ENCODE measurements at regions of chr14 and their contacts with region 1.

Region 1: GRCh38 chr14:75205591-75205990 is 29.2 kb upstream of the TMED10 start:
- DNase-seq: peak; percentile 82
- H3K4me3 ChIP-seq: no peak overlapping the region
- H3K27ac ChIP-seq: peak overlapping the region; percentile 74
- H3K4me1 ChIP-seq: peaks cover 15% of the 10 kb centered on the region
- H3K27me3 ChIP-seq: no peaks in the 10 kb centered on the region
- CTCF ChIP-seq: no peak
- POLR2A ChIP-seq: no peak

Region 2: DNA sequence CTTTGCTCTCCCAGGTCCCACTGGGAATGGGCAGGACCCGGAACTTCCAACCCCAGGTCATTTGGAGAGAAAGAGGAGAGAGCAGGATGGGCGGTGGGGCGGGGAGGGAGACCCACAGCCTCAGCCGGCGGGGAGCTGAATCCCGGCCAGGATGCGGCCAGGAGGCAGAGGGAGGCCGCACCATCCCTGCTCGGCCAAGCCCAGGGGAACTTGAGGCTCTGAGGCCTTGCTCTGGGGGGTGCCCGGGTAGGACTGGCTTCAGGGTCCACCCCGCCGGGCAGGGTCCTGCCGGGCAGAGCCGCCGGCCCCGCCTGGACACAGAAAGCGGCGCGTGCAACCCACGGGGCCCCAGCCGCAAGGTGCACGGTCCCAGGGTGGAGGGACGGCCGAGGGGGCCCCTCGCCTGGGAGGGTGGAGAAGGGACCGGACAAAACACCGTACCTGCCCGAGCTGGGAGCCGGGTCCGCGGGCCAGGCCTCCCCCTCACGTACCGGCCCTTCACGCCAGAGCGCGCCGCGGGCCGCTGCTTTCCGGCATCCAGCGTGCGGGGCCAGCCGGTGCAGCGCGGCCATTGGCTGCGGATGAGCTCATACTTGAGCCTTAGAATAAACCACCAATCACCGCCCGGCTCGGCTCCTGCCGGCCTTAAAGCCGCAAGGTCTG is 282.7 kb before region 1 on chr14 and contains the start of gene RPS6KL1:
- CTCF ChIA-PET with region 1: no interaction called
- POLR2A ChIA-PET with region 1: no interaction called
- dilution Hi-C with region 1: no loop called
- intact Hi-C with region 1: no loop called
- DNase-seq: peak; percentile 87
- H3K4me3 ChIP-seq: peak within 1 kb of the TSS; percentile 55 to 69 (median 58)
- H3K27ac ChIP-seq: peak within 1 kb of the TSS; percentile 50
- H3K4me1 ChIP-seq: peaks cover 5% of the 10 kb centered on the region
- H3K27me3 ChIP-seq: no peaks in the 10 kb centered on the region
- CTCF ChIP-seq: no peak
- POLR2A ChIP-seq: no peak
- total RNA-seq, gene RPS6KL1: 23.8 and 25.6 TPM in 2 replicates

Region 3: GRCh38 chr14:75234173-75235115 is 28.9 kb after region 1 on chr14:
- CTCF ChIA-PET with region 1: interaction called, 3 read pairs
- POLR2A ChIA-PET with region 1: no interaction called
- dilution Hi-C with region 1: no loop called
- intact Hi-C with region 1: loop called (anchors 1 kb)
- DNase-seq: peak; percentile 92
- H3K4me3 ChIP-seq: no peak overlapping the region
- H3K27ac ChIP-seq: peak overlapping the region; percentile 91
- H3K4me1 ChIP-seq: peaks cover 23% of the 10 kb centered on the region
- H3K27me3 ChIP-seq: no peaks in the 10 kb centered on the region
- CTCF ChIP-seq: no peak
- POLR2A ChIP-seq: no peak

Region 4: GRCh38 chr14:75522224-75522982 is 316.8 kb after region 1 on chr14 and contains the start of gene BATF:
- CTCF ChIA-PET with region 1: no interaction called
- POLR2A ChIA-PET with region 1: no interaction called
- dilution Hi-C with region 1: no loop called
- intact Hi-C with region 1: no loop called
- DNase-seq: no peak
- H3K4me3 ChIP-seq: no peak within 1 kb of the TSS
- H3K27ac ChIP-seq: peak within 1 kb of the TSS; percentile 82
- H3K4me1 ChIP-seq: peaks cover 25% of the 10 kb centered on the region
- H3K27me3 ChIP-seq: no peaks in the 10 kb centered on the region
- CTCF ChIP-seq: no peak
- POLR2A ChIP-seq: no peak
- total RNA-seq, gene BATF: not detected in 2 replicates